Naive thymus-derived CD4-positive, alpha-beta T cell (primary cell): ENCODE measurements at regions of chr12 and their contacts with region 1.

Region 1: DNA sequence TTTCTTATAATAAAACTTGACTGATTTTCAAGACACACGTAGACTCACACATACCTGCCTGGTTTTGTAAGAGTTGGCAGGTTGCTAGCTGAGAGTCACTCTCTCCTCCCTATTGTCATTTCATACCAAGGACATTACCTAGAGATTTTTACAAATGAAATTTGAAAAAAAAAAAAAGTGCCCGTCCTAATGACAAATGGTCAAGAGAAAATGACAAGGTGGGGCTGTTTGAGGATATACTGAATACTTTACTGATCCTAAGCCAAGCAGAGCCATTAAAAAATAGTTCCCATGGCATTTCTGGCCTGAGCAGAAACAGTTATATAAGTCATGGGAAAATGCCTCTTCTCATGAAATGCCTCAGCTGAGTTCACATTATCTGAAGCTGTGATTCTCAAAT is 150.2 kb downstream of the DYRK2 start:
- DNase-seq: no peak
- ATAC-seq: no peak
- H3K4me3 ChIP-seq: no peak overlapping the region
- H3K4me3 Mint-ChIP-seq: peak overlapping the region in 1 of 10 donors; percentile 1
- H3K27ac ChIP-seq: no peak overlapping the region
- H3K27ac Mint-ChIP-seq: no peak overlapping the region
- H3K4me1 ChIP-seq: peaks cover 5 to 15% of the 10 kb centered on the region in 2 donors
- H3K4me1 Mint-ChIP-seq: peaks cover 4 to 32% (median 8%) of the 10 kb centered on the region in 7 donors
- H3K27me3 ChIP-seq: no peaks in the 10 kb centered on the region
- H3K27me3 Mint-ChIP-seq: peaks cover 0 to 7% (median 6%) of the 10 kb centered on the region in 5 donors

Region 2: GRCh38 chr12:67765776-67766767 is 32.7 kb before region 1 on chr12:
- CTCF ChIA-PET with region 1: no interaction called
- POLR2A ChIA-PET with region 1: no interaction called
- intact Hi-C with region 1: loop called in 1 of 2 experiments (anchors 1 kb)
- DNase-seq: no peak
- ATAC-seq: no peak
- H3K4me3 ChIP-seq: no peak overlapping the region
- H3K4me3 Mint-ChIP-seq: no peak overlapping the region
- H3K27ac ChIP-seq: no peak overlapping the region
- H3K27ac Mint-ChIP-seq: no peak overlapping the region
- H3K4me1 ChIP-seq: no peaks in the 10 kb centered on the region
- H3K4me1 Mint-ChIP-seq: no peaks in the 10 kb centered on the region
- H3K27me3 ChIP-seq: no peaks in the 10 kb centered on the region
- H3K27me3 Mint-ChIP-seq: no peaks in the 10 kb centered on the region

Region 3: DNA sequence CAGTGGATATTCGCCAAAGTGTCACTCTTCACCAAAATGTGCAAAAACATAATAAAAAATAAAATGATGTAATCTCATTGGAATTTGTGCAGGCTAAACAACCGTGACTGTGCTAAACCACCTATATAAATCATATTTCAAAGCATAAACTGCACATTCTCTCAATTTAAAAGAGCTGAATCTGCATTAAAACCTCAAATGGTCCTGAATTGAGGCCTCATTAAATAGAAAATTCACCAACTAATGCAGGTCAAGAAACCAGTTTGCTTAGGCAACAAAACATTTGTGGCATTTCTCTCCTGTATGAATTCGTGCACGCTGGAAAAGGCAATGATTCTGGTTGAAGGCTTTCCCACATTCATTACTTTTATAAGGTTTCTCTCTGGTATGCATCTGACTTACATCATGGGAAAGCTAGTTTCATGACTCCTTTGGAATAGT is 110.3 kb after region 1 on chr12:
- CTCF ChIA-PET with region 1: no interaction called
- POLR2A ChIA-PET with region 1: no interaction called
- intact Hi-C with region 1: no loop called
- DNase-seq: no peak
- ATAC-seq: no peak
- H3K4me3 ChIP-seq: no peak overlapping the region
- H3K4me3 Mint-ChIP-seq: no peak overlapping the region
- H3K27ac ChIP-seq: no peak overlapping the region
- H3K27ac Mint-ChIP-seq: no peak overlapping the region
- H3K4me1 ChIP-seq: no peaks in the 10 kb centered on the region
- H3K4me1 Mint-ChIP-seq: no peaks in the 10 kb centered on the region
- H3K27me3 ChIP-seq: no peaks in the 10 kb centered on the region
- H3K27me3 Mint-ChIP-seq: peaks cover 0 to 13% (median 8%) of the 10 kb centered on the region in 5 donors